BJ (cell line): ENCODE measurements at regions of chr14 and their contacts with region 1.

Region 1: DNA sequence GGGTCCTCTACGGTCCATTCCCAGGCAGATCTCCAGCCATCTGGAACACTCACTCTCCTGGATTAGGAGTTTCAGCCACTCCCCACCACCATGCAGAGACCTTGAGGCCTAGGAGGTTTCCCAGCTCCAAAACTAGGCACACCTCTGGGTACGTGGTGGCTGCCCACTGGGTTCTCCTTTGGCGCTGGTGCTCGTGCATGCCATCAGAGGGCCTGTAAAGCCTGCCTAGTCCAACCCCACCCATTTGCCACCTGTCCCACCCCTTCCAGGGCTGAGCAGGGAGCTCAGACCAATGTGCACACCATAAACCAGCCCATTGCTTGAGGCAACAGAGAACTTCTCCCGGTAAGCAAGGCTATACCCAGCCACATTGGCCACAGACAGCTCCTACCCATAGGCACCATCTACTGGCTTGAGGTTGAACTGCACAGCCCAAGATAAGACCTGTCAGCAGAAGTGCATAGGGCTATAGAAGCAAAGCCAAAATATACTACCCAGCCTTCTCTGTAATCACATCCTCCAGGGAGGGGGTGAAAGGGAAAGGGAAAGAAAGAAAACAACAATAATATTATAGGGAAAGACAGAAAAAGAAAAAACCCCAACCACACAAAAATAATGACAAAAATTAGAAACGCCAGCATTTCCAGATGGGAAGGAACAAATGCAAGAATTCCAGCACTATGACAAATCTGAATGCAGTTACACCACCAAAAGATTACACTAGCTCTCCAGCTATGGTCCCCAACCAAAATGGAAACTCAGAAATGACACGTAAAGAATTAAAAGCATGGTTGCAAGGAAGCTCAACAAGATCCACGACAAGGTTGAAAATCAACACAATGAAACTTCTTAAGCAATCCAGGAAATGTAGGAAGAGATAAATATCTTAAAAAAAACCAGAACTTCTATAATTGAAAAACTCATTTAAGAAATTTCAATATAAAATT is 111.9 kb upstream of the CCDC175 start:
- DNase-seq: no peak
- H3K4me3 ChIP-seq: no peak overlapping the region
- H3K27me3 ChIP-seq: no peaks in the 10 kb centered on the region
- CTCF ChIP-seq: peak; percentile 85

Region 2: GRCh38 chr14:59632381-59632780 is 56.1 kb before region 1 on chr14:
- CTCF ChIA-PET with region 1: interaction called, 30 read pairs
- POLR2A ChIA-PET with region 1: no interaction called
- DNase-seq: no peak
- H3K4me3 ChIP-seq: no peak overlapping the region
- H3K27me3 ChIP-seq: peaks cover 3% of the 10 kb centered on the region; the same call in 1 of the 2 replicates
- CTCF ChIP-seq: peak; percentile 52

Region 3: DNA sequence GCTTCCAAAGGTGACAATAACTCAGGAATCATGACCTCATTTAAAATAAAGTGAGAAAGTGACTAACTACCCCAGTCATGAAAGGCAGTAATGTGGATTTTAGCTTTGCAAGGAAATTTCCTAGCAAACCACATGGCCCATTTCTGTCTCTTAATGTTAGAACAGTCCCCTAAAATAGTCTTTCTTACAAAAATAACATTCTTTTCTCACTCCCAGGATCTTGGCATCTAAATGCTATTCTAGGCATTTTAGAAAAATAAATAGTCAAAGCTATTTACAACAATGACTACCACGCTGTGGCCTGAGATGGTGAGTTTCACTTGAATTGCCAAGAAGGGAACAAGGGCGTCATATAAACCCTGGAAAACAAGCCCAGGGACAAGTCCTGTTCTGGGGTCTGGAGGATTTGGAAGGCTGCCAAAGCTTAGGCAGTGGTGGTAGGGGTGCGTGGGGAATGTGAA is 10.7 kb before region 1 on chr14:
- CTCF ChIA-PET with region 1: interaction called, 11 read pairs
- POLR2A ChIA-PET with region 1: no interaction called
- DNase-seq: peak; percentile 57
- H3K4me3 ChIP-seq: no peak overlapping the region
- H3K27me3 ChIP-seq: 0 out of 2 replicates have a peak, but pooled peaks cover 1% of the 10 kb centered on the region
- CTCF ChIP-seq: no peak